Activated CD8-positive, alpha-beta T cell treated with anti-CD3 and anti-CD28 coated beads for 36 hours (primary cell): ENCODE measurements at regions of chr7 and their contacts with region 1.

Region 1: GRCh38 chr7:351681-352480 is 61.9 kb downstream of the FOXL3 start:
- DNase-seq: peak; percentile 75
- ATAC-seq: peak; percentile 70
- H3K4me3 Mint-ChIP-seq: no peak overlapping the region
- H3K27ac Mint-ChIP-seq: no peak overlapping the region
- H3K4me1 Mint-ChIP-seq: peaks cover 12% of the 10 kb centered on the region
- H3K27me3 Mint-ChIP-seq: no peaks in the 10 kb centered on the region
- CTCF ChIP-seq: no peak

Region 2: GRCh38 chr7:362402-363096 is 10.7 kb after region 1 on chr7:
- CTCF ChIA-PET with region 1: interaction called, 5 read pairs
- POLR2A ChIA-PET with region 1: interaction called, 10 read pairs
- intact Hi-C with region 1: no loop called
- DNase-seq: peak; percentile 69
- ATAC-seq: peak; percentile 56
- H3K4me3 Mint-ChIP-seq: peak overlapping the region; percentile 63
- H3K27ac Mint-ChIP-seq: peak overlapping the region; percentile 89
- H3K4me1 Mint-ChIP-seq: peaks cover 67% of the 10 kb centered on the region
- H3K27me3 Mint-ChIP-seq: no peaks in the 10 kb centered on the region
- CTCF ChIP-seq: no peak

Region 3: GRCh38 chr7:381211-382042 is 29.5 kb after region 1 on chr7:
- CTCF ChIA-PET with region 1: no interaction called
- POLR2A ChIA-PET with region 1: interaction called, 10 read pairs
- intact Hi-C with region 1: no loop called
- DNase-seq: peak; percentile 57
- ATAC-seq: peak; percentile 75
- H3K4me3 Mint-ChIP-seq: no peak overlapping the region
- H3K27ac Mint-ChIP-seq: peak overlapping the region; percentile 83
- H3K4me1 Mint-ChIP-seq: peaks cover 24% of the 10 kb centered on the region
- H3K27me3 Mint-ChIP-seq: no peaks in the 10 kb centered on the region
- CTCF ChIP-seq: no peak